Dorsolateral prefrontal cortex (tissue), 120 donors: ENCODE measurements at regions of chr18 and their contacts with region 1.

Region 1: DNA sequence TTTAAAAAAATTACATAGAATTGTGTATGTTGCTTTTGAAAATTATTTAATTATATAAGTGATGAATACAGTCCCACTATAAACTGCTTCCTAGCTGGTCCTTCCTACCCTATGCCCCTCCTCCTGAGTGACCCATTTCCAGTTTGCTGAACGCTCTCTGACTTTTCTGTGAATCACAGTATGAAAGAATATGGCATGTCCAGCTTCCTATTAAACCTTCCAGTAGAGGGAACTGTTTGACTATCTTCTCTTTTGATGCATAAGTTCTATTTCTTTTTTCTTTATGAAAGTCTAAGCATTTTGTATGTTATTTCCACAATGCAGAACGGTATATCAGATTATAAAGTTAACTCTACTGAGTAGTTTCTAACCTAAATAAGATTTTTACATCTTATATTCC is 41.3 kb downstream of the PSMG2 start:
- DNase-seq: no peak
- H3K4me3 ChIP-seq: no peak overlapping the region
- H3K27ac ChIP-seq: no peak overlapping the region
- H3K27me3 ChIP-seq: no peaks in the 10 kb centered on the region
- CTCF ChIP-seq: peak in 55 of 56 donors; percentile 14 to 81 (median 62)

Region 2: DNA sequence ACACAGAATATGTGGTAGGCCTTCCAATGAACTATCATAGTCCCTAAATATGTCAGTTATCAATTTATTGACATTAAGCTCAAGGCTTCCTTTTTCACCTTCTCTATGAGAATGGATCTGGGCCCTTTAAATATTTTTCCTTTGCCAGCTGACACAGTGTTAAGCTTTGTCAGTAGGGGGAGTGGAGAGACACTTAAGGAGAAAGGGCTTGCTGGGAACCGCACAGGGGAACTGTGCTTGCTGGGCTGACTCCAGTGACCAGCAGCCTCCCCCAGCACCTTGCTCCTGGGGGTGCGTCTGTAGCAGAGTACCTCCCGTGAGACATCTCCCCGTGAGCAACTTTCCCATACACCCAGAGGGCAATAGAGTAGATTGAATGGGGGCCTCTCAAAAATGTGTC is 146.4 kb after region 1 on chr18:
- intact Hi-C with region 1: loop called in 1 of 2 experiments (anchors 5 kb)
- DNase-seq: no peak
- H3K4me3 ChIP-seq: no peak overlapping the region
- H3K27ac ChIP-seq: no peak overlapping the region
- H3K27me3 ChIP-seq: peaks cover 0 to 19% (median 0%) of the 10 kb centered on the region in 45 donors
- CTCF ChIP-seq: no peak

Region 3: DNA sequence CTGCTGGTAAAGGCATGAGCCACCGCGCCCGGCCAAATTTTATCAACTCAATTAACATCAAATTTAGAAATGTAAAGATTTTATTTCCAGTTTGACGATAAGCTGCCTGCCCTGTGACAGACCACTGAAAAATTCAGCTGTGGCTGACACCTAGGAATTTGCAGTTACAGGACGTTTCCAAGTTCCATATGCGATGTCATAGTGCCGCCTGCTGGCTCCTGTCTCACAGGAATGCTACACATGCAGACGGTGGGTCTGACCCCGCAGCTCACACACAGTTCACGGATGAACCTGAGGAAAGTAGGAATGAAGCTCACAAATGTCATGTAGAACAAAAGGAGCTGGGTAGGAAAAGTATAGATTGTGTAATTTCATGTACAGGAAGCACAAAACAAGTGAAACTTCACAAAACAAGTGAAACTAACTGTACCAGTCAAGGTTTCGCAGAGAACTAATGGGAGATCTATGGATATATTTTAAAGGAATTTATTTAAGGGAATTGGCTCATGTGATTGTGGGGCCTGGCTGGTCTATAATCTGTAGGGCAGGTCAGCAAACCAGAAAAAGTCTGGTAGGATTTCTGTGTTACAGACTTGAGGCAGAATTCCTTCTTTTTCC is 190.5 kb after region 1 on chr18:
- intact Hi-C with region 1: loop called (anchors 2 to 5 kb)
- DNase-seq: peak; percentile 69 to 93 (median 84)
- H3K4me3 ChIP-seq: peak overlapping the region in 3 of 59 donors; percentile 2 to 25 (median 14)
- H3K27ac ChIP-seq: no peak overlapping the region
- H3K27me3 ChIP-seq: no peaks in the 10 kb centered on the region
- CTCF ChIP-seq: peak; percentile 71 to 99 (median 89)

Region 4: GRCh38 chr18:13775058-13775457 is 1031.0 kb after region 1 on chr18:
- intact Hi-C with region 1: no loop called
- DNase-seq: no peak
- H3K4me3 ChIP-seq: no peak overlapping the region
- H3K27ac ChIP-seq: no peak overlapping the region
- H3K27me3 ChIP-seq: no peaks in the 10 kb centered on the region
- CTCF ChIP-seq: no peak